Gastrocnemius medialis (tissue), 4 donors: ENCODE measurements at regions of chr2 and their contacts with region 1.

Region 1: GRCh38 chr2:55033066-55033742 is 17.0 kb downstream of the RTN4 start:
- DNase-seq: no peak
- ATAC-seq: no peak
- H3K4me3 ChIP-seq: no peak overlapping the region
- H3K27ac ChIP-seq: no peak overlapping the region
- H3K4me1 ChIP-seq: peaks cover 3 to 9% of the 10 kb centered on the region in 2 donors
- H3K27me3 ChIP-seq: no peaks in the 10 kb centered on the region
- CTCF ChIP-seq: no peak
- POLR2A ChIP-seq: no peak

Region 2: DNA sequence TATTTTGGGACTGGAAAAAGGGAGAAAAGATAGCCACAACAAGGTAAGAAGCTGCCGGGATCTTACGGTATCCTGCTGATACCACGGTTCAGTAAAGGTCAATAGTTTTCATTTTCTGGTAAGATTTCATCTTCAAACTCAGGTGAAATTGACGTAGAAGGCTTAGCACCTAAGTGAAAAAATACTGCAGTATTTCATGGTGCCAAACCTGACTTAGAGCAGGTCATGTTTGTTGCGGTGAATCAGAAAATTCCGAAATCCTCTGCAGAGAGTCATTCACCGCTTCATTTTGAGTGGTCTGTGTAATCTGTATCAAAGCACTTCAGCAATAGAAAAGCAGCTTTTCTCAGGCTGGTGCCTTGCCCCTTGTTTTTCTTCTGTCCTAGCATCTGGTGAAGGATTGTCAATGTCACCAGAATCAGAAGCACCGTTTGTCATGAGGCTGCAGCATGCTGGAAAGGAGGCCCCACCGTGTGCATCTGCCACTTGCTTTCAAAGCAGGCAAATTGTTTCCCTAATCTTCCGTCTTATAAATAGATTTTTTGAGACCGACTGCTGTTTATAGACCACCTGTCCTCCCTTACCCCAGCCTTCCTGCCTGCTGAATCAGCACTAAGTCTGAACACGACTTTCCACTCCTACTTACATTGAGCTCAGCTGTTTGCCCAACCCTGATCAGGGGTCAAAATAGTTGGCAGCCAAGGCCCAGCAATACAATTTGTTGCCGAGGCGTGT is 153.4 kb before region 1 on chr2:
- in situ Hi-C with region 1: loop called in 1 of 4 experiments (anchors 10 kb)
- intact Hi-C with region 1: no loop called
- DNase-seq: no peak
- ATAC-seq: peak; percentile 22 to 57
- H3K4me3 ChIP-seq: no peak overlapping the region
- H3K27ac ChIP-seq: peak overlapping the region; percentile 16 to 77 (median 54)
- H3K4me1 ChIP-seq: peaks cover 15 to 18% of the 10 kb centered on the region in 2 donors
- H3K27me3 ChIP-seq: no peaks in the 10 kb centered on the region
- CTCF ChIP-seq: no peak
- POLR2A ChIP-seq: no peak

Region 3: GRCh38 chr2:55168221-55169154 is 135.3 kb after region 1 on chr2:
- in situ Hi-C with region 1: loop called in 1 of 4 experiments (anchors 10 kb)
- intact Hi-C with region 1: no loop called
- DNase-seq: peak in 1 of 2 donors; percentile 41
- ATAC-seq: peak; percentile 75 to 79
- H3K4me3 ChIP-seq: no peak overlapping the region
- H3K27ac ChIP-seq: peak overlapping the region in 1 of 4 donors; percentile 1
- H3K4me1 ChIP-seq: peaks cover 0 to 8% of the 10 kb centered on the region in 2 donors
- H3K27me3 ChIP-seq: no peaks in the 10 kb centered on the region
- CTCF ChIP-seq: peak; percentile 26 to 56 (median 52)
- POLR2A ChIP-seq: no peak